Heart left ventricle (tissue), 16 donors: ENCODE measurements at regions of chr7 and their contacts with region 1.

Region 1: GRCh38 chr7:117110480-117111337 is 157.4 kb downstream of the ST7 start:
- DNase-seq: no peak
- ATAC-seq: peak in 3 of 4 donors; percentile 32 to 42 (median 39)
- H3K4me3 ChIP-seq: no peak overlapping the region
- H3K27ac ChIP-seq: no peak overlapping the region
- H3K4me1 ChIP-seq: peaks cover 3 to 26% (median 14%) of the 10 kb centered on the region in 12 donors
- H3K27me3 ChIP-seq: no peaks in the 10 kb centered on the region
- CTCF ChIP-seq: no peak
- POLR2A ChIP-seq: no peak

Region 2: GRCh38 chr7:117008883-117009531 is 101.7 kb before region 1 on chr7:
- intact Hi-C with region 1: loop called in 1 of 10 experiments (anchors 5 kb)
- DNase-seq: no peak
- ATAC-seq: no peak
- H3K4me3 ChIP-seq: no peak overlapping the region
- H3K27ac ChIP-seq: no peak overlapping the region
- H3K4me1 ChIP-seq: peaks cover 0 to 45% (median 9%) of the 10 kb centered on the region in 12 donors
- H3K27me3 ChIP-seq: no peaks in the 10 kb centered on the region
- CTCF ChIP-seq: no peak
- POLR2A ChIP-seq: no peak

Region 3: DNA sequence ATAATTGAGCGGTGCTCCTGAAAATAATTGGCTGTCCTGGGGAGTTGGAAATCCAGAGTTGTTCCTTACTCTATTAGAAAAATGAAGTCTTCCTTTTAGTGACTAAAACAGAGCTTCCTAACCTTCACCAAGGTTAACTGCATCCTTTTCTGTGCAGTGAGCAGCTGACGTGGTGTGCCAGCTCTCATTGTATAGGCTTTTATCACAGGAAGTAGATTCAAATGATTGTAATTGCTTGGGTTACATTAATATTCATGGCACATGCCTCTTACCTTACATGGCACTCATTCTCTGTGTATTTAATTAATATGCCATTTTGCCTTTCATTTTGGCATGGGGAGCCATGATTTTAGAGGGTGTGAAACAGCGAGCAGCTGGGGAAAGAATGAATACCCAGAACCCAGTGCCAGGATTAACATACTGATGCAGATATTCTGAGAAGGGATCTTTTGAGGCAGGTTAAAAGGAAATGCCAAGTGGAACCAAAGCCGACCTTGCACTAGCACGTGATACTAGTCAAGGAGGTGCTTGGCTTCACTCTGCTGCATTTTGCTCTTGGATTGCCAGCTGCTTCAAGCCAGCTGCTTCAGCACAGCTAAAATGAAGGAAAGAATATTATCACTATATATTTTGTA is 42.1 kb before region 1 on chr7:
- intact Hi-C with region 1: no loop called
- DNase-seq: no peak
- ATAC-seq: no peak
- H3K4me3 ChIP-seq: no peak overlapping the region
- H3K27ac ChIP-seq: no peak overlapping the region
- H3K4me1 ChIP-seq: peaks cover 0 to 54% (median 35%) of the 10 kb centered on the region in 12 donors
- H3K27me3 ChIP-seq: no peaks in the 10 kb centered on the region
- CTCF ChIP-seq: no peak
- POLR2A ChIP-seq: no peak

Region 4: DNA sequence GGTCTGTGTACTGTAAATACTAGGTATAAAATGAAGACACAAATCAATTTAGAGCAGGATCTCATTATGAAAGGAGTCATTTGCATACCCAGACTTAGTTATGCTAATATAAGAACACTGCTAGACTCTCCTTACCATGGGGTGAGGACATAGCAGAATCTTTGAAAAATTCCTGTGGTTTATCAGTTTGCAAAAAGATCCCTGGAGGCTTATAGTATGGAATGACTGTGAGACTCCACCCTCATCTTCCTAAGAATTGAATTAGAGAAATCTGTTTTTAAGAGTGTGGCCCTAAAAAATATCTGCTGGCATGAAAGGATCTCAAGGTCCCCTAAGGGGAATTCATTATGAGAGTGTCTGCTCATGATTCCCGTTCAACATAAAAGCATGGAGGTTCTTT is 148.9 kb after region 1 on chr7:
- intact Hi-C with region 1: no loop called
- DNase-seq: no peak
- ATAC-seq: no peak
- H3K4me3 ChIP-seq: no peak overlapping the region
- H3K27ac ChIP-seq: no peak overlapping the region
- H3K4me1 ChIP-seq: no peaks in the 10 kb centered on the region
- H3K27me3 ChIP-seq: no peaks in the 10 kb centered on the region
- CTCF ChIP-seq: no peak
- POLR2A ChIP-seq: no peak

Region 5: DNA sequence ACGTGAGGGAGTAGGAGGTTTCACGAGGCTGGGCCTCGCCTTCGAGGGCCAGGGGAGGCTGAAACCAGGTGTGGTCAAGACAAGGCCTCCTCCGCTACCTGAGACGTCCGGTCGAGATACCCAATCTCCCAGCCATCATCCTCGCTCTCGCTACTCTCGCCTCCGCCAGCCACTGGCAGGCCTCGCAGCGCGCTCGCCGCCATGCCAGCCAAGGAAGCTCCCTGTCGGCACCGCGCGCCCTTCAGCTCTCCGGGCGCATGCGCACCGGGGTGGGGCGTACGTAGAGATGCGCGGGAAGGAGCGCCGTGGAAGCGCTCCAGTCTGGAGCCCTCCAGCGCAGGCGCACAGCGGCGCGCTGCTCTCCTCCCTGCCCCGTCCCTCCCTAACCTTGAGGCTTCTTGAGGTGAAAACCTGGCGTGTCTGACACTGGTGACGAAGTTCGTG is 316.6 kb after region 1 on chr7 and contains the start of gene ASZ1:
- intact Hi-C with region 1: no loop called
- DNase-seq: no peak
- ATAC-seq: no peak
- H3K4me3 ChIP-seq: no peak within 1 kb of the TSS
- H3K27ac ChIP-seq: no peak within 1 kb of the TSS
- H3K4me1 ChIP-seq: no peaks in the 10 kb centered on the region
- H3K27me3 ChIP-seq: no peaks in the 10 kb centered on the region
- CTCF ChIP-seq: no peak
- POLR2A ChIP-seq: no peak
- total RNA-seq, gene ASZ1: not detected